Mammary epithelial cell (primary cell): ENCODE measurements at regions of chr19 and their contacts with region 1.

Region 1: GRCh38 chr19:48674921-48675824 is 2.4 kb upstream of the NTN5 start:
- DNase-seq: peak; percentile 70
- H3K4me3 ChIP-seq: no peak overlapping the region
- H3K27ac ChIP-seq: no peak overlapping the region
- H3K4me1 ChIP-seq: peaks cover 4% of the 10 kb centered on the region
- H3K27me3 ChIP-seq: no peaks in the 10 kb centered on the region
- CTCF ChIP-seq: peak; percentile 79 to 85

Region 2: GRCh38 chr19:48738557-48739399 is 63.6 kb after region 1 on chr19:
- CTCF ChIA-PET with region 1: no interaction called
- dilution Hi-C with region 1: no loop called
- in situ Hi-C with region 1: no loop called
- intact Hi-C with region 1: loop called (anchors 1 kb)
- DNase-seq: peak; percentile 86
- H3K4me3 ChIP-seq: peak overlapping the region; percentile 9 to 49 (median 49)
- H3K27ac ChIP-seq: no peak overlapping the region
- H3K4me1 ChIP-seq: peaks cover 6% of the 10 kb centered on the region
- H3K27me3 ChIP-seq: no peaks in the 10 kb centered on the region
- CTCF ChIP-seq: peak in 1 of 2 donors; percentile 34

Region 3: DNA sequence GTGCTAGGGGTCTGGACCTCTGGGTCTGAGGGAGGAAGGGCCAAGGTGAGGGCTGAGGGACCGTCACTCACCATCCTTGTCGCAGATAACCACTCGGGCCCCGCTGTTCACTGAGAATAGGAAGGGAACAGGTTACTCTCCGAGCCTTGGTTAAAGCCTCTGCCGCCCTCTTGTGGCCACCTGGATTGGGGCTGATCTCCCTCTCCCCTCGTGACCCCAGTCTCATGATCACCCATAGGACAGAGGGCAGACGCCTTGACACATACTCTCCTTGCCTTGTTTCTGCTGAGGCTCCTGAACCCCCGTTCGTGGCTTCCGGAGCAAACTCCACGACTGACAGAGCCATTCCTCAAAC is 160.5 kb after region 1 on chr19:
- CTCF ChIA-PET with region 1: no interaction called
- dilution Hi-C with region 1: loop called (anchors 5 kb)
- in situ Hi-C with region 1: no loop called
- intact Hi-C with region 1: loop called (anchors 10 kb)
- DNase-seq: peak; percentile 76
- H3K4me3 ChIP-seq: peak overlapping the region in 1 of 3 experiments; percentile 24
- H3K27ac ChIP-seq: no peak overlapping the region
- H3K4me1 ChIP-seq: peaks cover 5% of the 10 kb centered on the region
- H3K27me3 ChIP-seq: no peaks in the 10 kb centered on the region
- CTCF ChIP-seq: peak; percentile 92 to 95